ENCODE measurements at regions of chr10 and their contacts with region 1.

Region 1: DNA sequence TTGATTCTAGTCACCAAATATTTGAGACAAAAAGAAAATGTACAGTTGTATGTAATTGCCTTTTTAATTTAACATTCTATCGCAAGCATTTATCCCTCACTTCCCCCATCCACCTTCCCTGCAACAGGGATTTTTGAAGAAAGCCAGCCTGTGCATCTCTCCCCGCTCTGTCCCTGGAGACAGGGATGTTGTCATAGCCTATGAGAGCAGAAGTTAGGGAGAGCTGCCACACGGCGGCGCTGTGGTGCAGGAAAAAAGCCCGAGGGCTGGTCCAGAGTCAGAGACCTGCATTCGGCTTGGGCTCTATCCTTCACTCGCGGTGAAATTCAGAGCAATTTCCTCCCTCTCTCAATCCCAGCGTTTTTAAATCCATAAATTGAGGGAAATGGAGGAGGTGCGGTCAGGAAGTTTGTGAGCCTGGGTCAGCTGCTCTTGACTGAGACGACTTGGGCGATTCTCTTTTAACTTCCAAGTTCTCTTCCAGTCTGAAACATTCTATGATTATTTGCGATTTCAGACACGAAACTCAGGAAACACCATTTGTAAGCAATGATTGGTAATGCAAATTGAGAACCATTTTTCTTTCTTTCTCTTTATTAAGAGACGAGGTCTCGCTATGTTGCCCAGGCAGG is 17.5 kb downstream of the HKDC1 start:
- DNase-seq: peak; percentile 75 to 93 (median 91)
- H3K4me3 ChIP-seq: no peak overlapping the region
- H3K27ac ChIP-seq: no peak overlapping the region
- H3K4me1 ChIP-seq: no peaks in the 10 kb centered on the region
- H3K27me3 ChIP-seq: no peaks in the 10 kb centered on the region
- CTCF ChIP-seq: peak; percentile 74 to 92 (median 92)
- EP300 ChIP-seq: no peak
- POLR2A ChIP-seq: no peak

Region 2: DNA sequence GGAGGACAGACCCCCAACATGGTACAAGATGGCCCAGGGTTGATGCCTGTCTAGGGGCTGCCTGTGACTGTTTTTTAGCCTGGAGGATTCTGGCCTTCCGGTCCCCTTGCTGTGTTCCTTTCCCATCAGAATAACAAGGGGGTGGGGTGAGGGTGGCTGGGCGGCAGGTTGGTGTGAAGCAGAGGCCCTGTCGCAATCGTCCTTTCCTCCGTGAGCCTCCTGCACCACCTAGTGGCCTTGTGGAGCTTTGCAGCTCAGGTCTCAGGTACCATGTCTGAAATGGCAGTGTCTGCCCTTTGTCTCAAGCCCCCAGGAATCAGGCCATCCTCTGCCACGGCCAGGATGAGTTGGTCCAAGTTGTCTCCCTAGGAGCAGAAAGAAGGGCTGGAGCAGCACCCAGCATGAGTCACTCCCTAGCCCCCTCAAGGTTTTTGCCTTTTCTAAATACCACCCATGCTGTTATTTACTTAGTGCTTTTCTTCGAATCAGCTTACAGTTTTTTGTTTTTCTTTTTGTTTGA is 154.9 kb after region 1 on chr10:
- intact Hi-C with region 1: loop called (anchors 2 to 5 kb)
- DNase-seq: peak; percentile 81 to 91 (median 84)
- H3K4me3 ChIP-seq: no peak overlapping the region
- H3K27ac ChIP-seq: no peak overlapping the region
- H3K4me1 ChIP-seq: no peaks in the 10 kb centered on the region
- H3K27me3 ChIP-seq: no peaks in the 10 kb centered on the region
- CTCF ChIP-seq: peak; percentile 90 to 97 (median 92)
- EP300 ChIP-seq: no peak
- POLR2A ChIP-seq: no peak

Region 3: GRCh38 chr10:69408318-69409175 is 170.9 kb after region 1 on chr10:
- intact Hi-C with region 1: loop called in 1 of 4 experiments (anchors 5 kb)
- DNase-seq: peak; percentile 97 to 98 (median 97)
- H3K4me3 ChIP-seq: peak overlapping the region; percentile 47
- H3K27ac ChIP-seq: peak overlapping the region; percentile 66 to 92
- H3K4me1 ChIP-seq: peaks cover 6% of the 10 kb centered on the region
- H3K27me3 ChIP-seq: no peaks in the 10 kb centered on the region
- CTCF ChIP-seq: peak; percentile 42 to 87 (median 43)
- EP300 ChIP-seq: no peak
- POLR2A ChIP-seq: no peak

Measured in ovary (tissue), 10 donors.